Activated T-helper 1 cell treated with anti-CD3 and anti-CD28 coated beads, Interleukin-12 subunit alpha, Interleukin-12 subunit beta, Interleukin-2, Interleukin-4 antibody, amounts not matched to agents 30 ng/mL and 10 ng/mL and 1 ng/mL, durations not matched to agents 14 hours and 24 hours and 36 hours (primary cell): ENCODE measurements at regions of chr19 and their contacts with region 1.

Region 1: DNA sequence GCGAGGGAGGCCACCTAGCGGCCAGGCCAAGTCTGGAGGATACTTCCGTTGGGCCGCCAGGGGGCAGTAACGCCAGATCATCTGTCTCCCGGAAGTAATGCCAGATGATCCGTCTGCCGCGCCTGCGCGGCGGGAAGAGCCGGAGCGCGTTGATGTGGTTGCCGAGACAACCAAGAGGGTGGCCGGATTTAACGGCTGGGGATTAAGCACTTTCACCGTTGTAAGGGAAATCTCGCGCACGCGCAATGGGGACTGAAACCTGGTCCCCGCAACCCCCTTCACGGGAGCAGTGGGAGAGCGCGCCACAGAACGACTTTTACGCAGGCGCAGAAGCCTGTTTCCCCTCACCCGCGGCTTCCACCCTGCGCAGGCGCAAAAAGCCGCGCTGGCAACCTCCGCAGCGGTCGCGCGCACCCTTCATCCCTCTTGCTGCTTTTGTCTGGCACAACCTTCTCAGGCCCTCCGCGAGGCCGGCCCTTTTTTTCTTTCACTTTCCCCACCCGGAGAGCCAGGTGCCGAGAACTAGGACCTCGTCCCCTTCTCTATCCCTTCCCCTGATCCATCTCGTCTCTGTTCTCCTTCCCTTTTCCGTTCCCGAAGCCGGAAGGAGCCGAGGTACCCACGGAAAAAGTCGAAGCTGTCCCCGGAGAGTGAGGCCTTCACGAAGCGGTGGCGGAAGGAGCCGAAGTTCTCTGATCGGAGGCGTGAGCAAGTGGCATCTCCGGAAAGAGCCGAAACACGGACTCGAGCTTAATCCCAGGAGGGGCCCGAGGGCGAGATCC is 886 bp upstream of the U2AF2 start:
- DNase-seq: peak; percentile 99
- H3K4me3 Mint-ChIP-seq: peak overlapping the region; percentile 93
- H3K27ac Mint-ChIP-seq: peak overlapping the region; percentile 99
- H3K4me1 Mint-ChIP-seq: peaks cover 43% of the 10 kb centered on the region
- H3K27me3 Mint-ChIP-seq: no peaks in the 10 kb centered on the region

Region 2: DNA sequence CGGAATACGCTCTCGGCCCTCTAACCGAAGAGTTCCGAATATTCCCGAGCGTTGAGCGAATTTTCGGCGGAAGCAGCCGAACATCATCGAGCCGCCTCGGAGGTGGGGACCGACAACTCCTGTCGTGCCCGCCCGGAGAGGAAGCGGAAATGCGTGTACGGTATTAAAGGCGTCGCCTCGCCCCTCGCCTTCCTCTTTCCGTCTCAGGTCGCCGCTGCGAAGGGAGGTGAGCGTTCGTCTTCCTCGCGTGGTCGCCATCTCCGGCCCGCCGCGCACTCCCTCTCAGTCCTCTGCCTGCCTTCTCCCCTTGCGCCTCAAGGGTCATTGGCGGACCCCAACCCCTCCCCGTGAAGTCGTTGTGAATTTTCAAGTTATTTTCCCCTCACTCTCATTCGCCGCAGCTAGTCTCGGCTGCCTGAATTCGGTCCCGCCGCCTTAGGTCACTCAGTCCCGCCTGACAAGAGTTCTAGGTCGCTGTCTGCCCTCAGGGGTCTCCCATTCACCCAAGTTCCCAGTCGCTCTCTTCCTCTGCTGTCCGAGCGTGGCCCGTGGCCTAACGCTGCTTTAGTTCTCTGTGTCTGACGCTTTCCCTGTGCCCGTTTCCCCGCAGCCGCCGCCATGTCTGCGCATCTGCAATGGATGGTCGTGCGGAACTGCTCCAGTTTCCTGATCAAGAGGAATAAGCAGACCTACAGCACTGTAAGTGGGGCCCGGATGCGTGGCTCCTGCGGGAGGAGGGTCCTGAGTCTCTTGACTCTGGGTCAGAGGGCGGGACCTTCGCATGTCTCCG is 268.0 kb before region 1 on chr19 and contains the start of gene RPL28:
- intact Hi-C with region 1: loop called (anchors 1 kb)
- DNase-seq: peak; percentile 99
- H3K4me3 Mint-ChIP-seq: peak within 1 kb of the TSS; percentile 99
- H3K27ac Mint-ChIP-seq: peak within 1 kb of the TSS; percentile 96
- H3K4me1 Mint-ChIP-seq: peaks cover 43% of the 10 kb centered on the region
- H3K27me3 Mint-ChIP-seq: no peaks in the 10 kb centered on the region
- total RNA-seq, gene RPL28: 1,835 and 1,847 TPM in 2 replicates

Region 3: DNA sequence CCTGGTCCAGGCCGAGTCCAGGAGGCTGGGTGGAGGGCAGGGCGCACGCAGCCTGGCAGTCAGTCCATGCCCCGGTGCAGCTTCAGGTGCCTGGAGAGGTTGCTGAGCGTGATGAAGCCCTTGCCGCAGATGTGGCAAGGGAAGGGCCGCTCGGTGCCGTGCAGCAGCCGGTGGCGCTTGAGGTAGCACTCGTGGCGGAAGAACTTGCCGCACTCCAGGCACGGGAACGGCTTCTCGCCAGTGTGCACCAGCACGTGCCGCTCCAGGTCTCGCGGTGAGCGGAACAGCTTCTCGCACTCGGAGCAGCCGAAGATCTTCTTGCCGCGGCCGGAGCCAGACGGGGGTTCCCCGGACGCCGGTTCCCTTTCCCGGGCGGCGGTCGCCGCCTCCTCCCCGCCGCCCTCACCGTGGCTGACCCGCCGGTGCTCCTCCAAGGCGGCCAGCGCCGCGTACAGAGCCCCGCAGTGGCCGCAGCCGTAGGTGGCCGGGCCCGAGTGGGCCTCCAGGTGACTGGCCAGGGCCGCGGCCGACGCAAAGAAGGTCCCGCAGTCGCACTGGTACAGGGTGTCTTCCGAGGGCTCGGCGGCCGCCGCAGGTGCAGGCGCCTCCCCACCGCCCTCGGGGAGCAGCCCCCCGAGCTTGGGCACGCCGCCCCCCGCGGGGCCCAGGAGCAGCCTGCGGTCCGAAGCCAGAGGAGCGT is 61.4 kb before region 1 on chr19:
- intact Hi-C with region 1: no loop called
- DNase-seq: no peak
- H3K4me3 Mint-ChIP-seq: no peak overlapping the region
- H3K27ac Mint-ChIP-seq: no peak overlapping the region
- H3K4me1 Mint-ChIP-seq: peaks cover under 1% of the 10 kb centered on the region
- H3K27me3 Mint-ChIP-seq: no peaks in the 10 kb centered on the region

Region 4: DNA sequence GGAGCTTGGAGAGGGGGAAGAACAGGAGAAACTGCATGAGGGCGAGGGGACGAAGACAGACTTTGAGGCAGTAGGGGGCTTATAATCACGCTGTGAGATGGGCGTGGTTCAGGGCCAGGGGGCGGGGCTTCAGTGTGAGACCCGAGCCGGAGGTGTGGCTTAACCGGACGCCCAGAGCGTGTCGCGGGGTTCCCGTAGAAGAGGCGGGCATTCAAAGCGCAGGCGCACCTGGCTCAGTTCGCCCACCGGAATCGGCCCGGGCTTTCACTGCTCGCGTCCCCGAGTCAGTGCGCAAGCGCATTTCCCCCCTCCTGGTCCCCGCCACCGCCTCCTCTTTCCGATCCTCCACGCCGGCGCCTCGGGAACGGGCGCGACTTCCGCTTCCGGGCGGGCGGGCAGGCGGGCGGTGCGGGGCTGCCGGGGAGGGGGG is 48.7 kb before region 1 on chr19:
- intact Hi-C with region 1: loop called (anchors 1 kb)
- DNase-seq: peak; percentile 98
- H3K4me3 Mint-ChIP-seq: peak overlapping the region; percentile 86
- H3K27ac Mint-ChIP-seq: peak overlapping the region; percentile 95
- H3K4me1 Mint-ChIP-seq: peaks cover 45% of the 10 kb centered on the region
- H3K27me3 Mint-ChIP-seq: no peaks in the 10 kb centered on the region

Region 5: DNA sequence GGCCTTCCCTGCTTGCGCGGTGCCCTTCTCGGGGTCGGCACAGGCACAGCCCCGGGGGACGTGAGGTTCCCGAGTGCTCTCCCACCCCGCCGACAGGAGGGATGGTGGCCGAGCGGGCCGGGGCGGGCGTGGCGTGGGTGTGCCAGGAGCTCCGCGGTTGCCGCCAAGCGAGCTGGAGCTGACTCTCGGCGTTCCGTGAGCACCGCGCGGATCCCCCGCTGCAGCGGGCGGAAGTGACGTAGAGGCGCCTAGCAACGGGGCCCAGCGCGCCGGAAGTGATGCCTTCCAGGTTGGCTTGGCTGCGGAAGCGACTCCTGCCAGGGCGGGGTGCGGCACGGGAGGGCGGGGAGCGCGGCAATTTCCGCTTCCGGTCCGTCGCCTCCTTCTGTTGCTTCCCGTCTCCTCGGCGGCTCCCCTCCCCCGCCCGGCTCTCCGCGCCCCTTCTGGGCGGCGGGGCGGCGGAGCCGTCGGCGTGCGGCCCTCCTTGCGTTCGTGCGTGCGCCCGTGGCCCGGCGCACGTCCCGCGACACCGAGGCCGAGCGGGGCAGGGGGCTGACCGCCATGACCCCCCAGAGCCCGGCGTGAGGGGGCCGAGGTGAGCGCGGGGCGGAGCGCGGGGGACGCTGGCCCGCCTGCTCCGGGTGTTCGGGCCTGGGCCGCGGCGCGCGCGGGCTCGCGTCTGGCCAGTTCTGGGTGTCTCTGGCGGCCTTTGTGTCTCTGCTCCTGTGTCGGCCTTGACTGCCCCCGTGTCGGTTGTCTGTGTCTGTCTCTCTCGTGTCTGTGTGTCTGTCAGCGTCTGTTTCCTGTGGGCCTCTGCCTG is 21.1 kb after region 1 on chr19 and contains the start of gene EPN1:
- intact Hi-C with region 1: loop called (anchors 1 kb)
- DNase-seq: peak; percentile 94
- H3K4me3 Mint-ChIP-seq: peak within 1 kb of the TSS; percentile 98
- H3K27ac Mint-ChIP-seq: peak within 1 kb of the TSS; percentile 95
- H3K4me1 Mint-ChIP-seq: peaks cover 47% of the 10 kb centered on the region
- H3K27me3 Mint-ChIP-seq: no peaks in the 10 kb centered on the region
- total RNA-seq, gene EPN1: 46.0 and 48.3 TPM in 2 replicates

Region 6: DNA sequence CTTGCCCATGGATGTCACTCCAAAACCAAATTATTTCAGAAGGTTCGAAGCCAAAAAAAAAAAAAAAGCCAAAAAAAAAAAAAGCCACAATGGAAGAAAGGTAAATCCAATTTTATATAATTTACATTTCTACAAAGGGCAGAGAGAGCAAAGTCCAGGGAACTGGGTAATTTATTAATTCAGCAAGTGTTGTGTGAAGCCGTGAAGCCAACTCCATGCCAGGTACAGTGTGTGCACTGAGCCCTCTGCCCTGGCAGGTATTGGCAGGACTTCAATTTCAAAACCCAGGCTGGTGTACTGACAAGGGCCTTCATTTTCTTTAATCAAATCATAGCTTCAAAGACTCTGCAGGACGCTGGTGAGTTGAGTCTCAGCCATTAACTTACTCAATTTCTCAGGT is 99.5 kb after region 1 on chr19:
- intact Hi-C with region 1: no loop called
- DNase-seq: no peak
- H3K4me3 Mint-ChIP-seq: no peak overlapping the region
- H3K27ac Mint-ChIP-seq: no peak overlapping the region
- H3K4me1 Mint-ChIP-seq: no peaks in the 10 kb centered on the region
- H3K27me3 Mint-ChIP-seq: no peaks in the 10 kb centered on the region